ENCODE measurements at regions of chr17 and their contacts with region 1.

Region 1: GRCh38 chr17:33779225-33779591 is 475.9 kb upstream of the CCL2 start:
- DNase-seq: peak in 5 of 6 donors; percentile 35 to 72 (median 43)
- ATAC-seq: peak; percentile 75 to 97 (median 89)
- H3K4me3 ChIP-seq: no peak overlapping the region
- H3K27ac ChIP-seq: no peak overlapping the region
- H3K4me1 ChIP-seq: no peaks in the 10 kb centered on the region
- H3K27me3 ChIP-seq: no peaks in the 10 kb centered on the region
- CTCF ChIP-seq: peak; percentile 92 to 97 (median 95)

Region 2: DNA sequence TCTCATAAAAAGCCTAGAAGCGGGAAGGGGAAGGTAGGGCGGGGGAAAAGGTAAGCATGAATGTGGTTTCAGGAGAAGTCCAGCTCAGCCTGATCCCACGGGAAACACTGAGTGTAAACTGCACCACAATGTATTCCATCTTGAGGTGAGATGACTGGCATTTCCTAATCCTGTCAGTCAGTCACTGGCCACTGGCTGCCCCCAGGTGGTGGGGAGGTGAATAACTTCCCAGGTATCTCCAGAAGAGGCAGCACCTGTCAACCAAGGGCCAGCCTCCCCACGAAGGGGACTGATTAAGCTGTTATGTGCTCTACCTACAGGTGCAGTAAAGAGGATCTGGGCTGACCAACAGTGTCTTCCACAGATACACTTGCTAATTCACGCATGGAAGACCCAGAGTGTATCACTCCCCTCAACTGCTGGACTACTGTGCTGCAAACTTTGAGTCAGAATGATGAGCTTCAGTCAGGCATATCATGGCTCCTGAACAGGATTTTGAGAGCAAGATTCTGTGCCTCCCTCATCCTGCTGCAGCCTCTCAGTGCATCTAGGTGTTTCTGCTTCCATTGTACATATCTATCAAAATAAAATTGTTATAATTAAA is 367.3 kb after region 1 on chr17:
- intact Hi-C with region 1: loop called in 1 of 3 experiments (anchors 5 kb)
- DNase-seq: peak; percentile 58 to 89 (median 69)
- ATAC-seq: peak; percentile 68 to 94 (median 82)
- H3K4me3 ChIP-seq: no peak overlapping the region
- H3K27ac ChIP-seq: no peak overlapping the region
- H3K4me1 ChIP-seq: no peaks in the 10 kb centered on the region
- H3K27me3 ChIP-seq: peaks cover 0 to 4% (median 0%) of the 10 kb centered on the region in 4 donors
- CTCF ChIP-seq: peak; percentile 30 to 63 (median 58)

Region 3: GRCh38 chr17:34156741-34157589 is 377.8 kb after region 1 on chr17:
- intact Hi-C with region 1: loop called in 1 of 3 experiments (anchors 5 kb)
- DNase-seq: peak in 1 of 6 donors; percentile 60
- ATAC-seq: peak in 1 of 4 donors; percentile 11
- H3K4me3 ChIP-seq: no peak overlapping the region
- H3K27ac ChIP-seq: no peak overlapping the region
- H3K4me1 ChIP-seq: no peaks in the 10 kb centered on the region
- H3K27me3 ChIP-seq: peaks cover 0 to 26% (median 0%) of the 10 kb centered on the region in 4 donors
- CTCF ChIP-seq: no peak

Region 4: DNA sequence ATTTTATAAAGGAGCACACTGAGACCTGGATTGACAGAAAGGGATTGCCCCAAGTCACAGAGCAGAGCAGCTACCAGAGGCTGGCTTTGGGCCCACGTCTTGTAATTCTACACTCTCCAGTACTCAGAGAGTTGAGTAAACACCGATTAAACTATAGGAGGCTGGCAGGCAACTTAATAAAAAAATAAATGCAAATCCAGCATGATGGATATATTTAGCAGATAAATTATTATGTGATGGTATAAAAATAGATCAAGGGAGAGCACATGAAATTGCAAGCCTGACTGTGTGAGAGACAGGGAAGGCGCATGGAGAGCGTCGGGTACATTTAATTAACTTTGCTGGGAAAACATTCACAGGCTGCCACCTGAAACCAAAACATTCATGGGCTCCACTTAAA is 388.1 kb after region 1 on chr17:
- intact Hi-C with region 1: loop called in 1 of 3 experiments (anchors 5 kb)
- DNase-seq: peak in 3 of 6 donors; percentile 20 to 34 (median 20)
- ATAC-seq: peak; percentile 60 to 81 (median 75)
- H3K4me3 ChIP-seq: no peak overlapping the region
- H3K27ac ChIP-seq: no peak overlapping the region
- H3K4me1 ChIP-seq: no peaks in the 10 kb centered on the region
- H3K27me3 ChIP-seq: peaks cover 0 to 19% (median 0%) of the 10 kb centered on the region in 4 donors
- CTCF ChIP-seq: no peak

Measured in pancreas (tissue), 10 donors.